ENCODE measurements at regions of chr16 and their contacts with region 1.

Region 1: GRCh38 chr16:4869147-4869805 is 22.0 kb downstream of the UBN1 start:
- DNase-seq: no peak
- H3K4me3 ChIP-seq: no peak overlapping the region
- CTCF ChIP-seq: no peak

Region 2: DNA sequence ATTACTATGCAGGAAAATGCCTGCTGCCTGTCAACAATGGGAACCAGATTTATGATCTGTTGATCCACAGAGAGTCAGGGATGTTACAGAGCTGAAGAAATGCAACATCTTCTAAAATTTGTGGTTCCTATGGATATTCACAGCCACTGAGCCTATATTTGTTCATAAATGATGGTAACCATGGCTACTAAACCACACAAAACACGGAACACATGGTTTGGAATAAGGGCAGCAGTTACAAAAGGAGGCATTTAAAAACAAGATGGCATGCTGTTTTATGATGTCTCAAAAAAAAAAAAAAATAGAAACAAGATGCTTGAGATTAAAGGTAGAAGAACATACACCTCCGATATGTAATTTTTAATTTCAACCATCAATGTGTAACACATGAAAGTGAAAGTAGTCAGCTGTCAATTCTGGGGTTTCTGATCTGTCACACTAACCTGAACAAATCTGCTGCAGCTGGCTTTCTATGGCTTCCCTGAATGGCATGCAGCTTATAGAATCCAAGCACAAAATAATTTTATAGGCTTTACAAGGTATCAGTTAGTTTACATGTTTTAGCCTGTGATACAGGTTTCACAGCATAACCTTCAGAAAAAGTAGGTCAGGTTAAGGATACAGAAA is 35.8 kb before region 1 on chr16:
- in situ Hi-C with region 1: loop called (anchors 5 kb)
- DNase-seq: no peak
- H3K4me3 ChIP-seq: no peak overlapping the region
- CTCF ChIP-seq: no peak

Region 3: DNA sequence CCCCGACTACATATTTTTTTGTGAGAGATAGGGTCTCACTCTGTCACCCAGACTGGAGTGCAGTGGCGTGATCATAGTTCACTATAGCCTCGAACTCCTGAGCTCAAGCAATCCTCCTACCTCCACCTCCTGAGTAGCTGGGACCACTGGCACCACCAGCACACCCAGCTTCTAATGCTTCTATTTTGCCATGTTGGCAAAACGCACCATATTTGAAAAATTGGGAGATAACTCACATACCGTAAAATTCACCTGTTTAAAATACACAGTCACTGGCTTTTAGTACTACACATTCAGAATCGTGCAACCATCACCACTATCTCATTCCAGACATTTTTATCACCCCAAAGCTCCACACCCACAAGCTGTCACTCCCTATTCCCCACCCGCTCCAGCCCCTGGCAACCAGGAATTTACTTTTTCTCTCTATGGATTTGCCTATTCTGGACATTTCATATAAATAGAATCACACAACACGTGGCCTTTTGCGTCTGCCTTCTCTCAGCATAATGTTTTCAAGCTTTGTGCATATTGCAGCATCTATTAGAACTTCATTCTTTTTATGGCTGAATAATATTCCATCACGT is 42.6 kb after region 1 on chr16:
- in situ Hi-C with region 1: loop called (anchors 5 kb)
- DNase-seq: no peak
- H3K4me3 ChIP-seq: no peak overlapping the region
- CTCF ChIP-seq: no peak

Region 4: GRCh38 chr16:4944333-4945281 is 75.3 kb after region 1 on chr16:
- in situ Hi-C with region 1: loop called (anchors 5 kb)
- DNase-seq: peak; percentile 94
- H3K4me3 ChIP-seq: no peak overlapping the region
- CTCF ChIP-seq: no peak

Region 5: DNA sequence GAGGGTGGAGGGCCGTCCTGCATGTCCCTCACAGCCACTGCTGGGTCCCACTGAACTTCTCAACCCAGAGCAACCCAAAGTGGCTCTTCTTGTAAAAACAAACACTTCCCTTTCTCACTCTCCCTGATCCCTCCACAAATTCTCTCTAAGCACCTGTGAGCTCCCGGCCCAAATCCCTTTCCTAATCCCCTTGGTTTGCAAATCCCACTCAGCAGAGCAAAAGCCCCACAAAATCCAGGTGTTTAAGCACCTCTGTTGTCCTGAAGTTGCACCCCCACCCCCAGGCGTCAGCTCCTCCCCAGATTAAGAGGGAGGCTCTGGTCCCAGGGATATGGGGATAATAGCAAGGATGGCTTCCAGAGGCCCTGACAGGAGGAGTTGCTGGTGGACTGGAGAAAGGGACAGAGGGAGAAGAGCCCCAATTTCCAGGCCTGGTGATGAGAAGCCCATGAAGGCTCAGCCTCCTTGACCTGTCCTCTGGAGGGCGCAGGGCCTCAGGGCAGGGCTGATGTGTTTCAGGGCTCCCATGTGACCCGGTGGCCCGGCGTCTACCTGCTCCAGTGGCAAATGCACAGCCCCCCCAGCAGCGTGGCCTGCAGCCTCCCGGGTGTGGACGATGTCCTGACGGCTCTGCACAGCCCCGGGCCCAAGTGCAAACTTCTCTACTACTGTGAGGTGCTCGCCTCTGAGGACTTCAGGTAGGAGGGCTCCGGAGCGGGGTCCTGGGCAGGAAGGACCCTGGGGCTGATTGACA is 141.5 kb after region 1 on chr16:
- in situ Hi-C with region 1: no loop called
- DNase-seq: no peak
- H3K4me3 ChIP-seq: no peak overlapping the region
- CTCF ChIP-seq: no peak